Stomach (tissue), 19 donors: ENCODE measurements at regions of chr1 and their contacts with region 1.

Region 1: DNA sequence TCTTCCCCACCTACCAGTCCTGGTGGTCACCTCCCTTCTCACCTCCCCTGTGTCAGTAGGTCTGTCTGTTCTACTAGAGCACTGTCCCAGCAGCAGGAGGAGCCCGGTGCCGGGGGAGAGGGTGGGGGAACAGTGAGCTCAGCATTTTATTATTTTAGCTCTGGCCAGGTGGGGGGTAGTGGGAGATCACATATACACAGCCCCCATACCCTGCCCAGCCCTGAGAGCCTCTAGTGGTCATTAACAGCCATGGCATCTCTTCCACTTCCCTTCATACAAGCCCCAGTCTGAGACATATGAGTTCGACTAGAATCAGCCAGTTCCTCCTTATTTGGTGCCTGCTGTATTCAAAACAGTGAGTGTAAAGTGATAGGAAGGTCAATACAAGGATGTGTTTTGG is at the start of gene TMOD4:
- DNase-seq: peak in 1 of 2 donors; percentile 29
- H3K4me3 ChIP-seq: no peak within 1 kb of the TSS
- H3K27ac ChIP-seq: peak within 1 kb of the TSS in 2 of 5 donors; percentile 32 to 33
- H3K4me1 ChIP-seq: peaks cover 0 to 10% (median 0%) of the 10 kb centered on the region in 4 donors
- H3K27me3 ChIP-seq: no peaks in the 10 kb centered on the region
- CTCF ChIP-seq: peak in 3 of 7 experiments; percentile 16 to 31 (median 23)
- EP300 ChIP-seq: no peak
- POLR2A ChIP-seq: no peak
- total RNA-seq, gene TMOD4: not detected

Region 2: DNA sequence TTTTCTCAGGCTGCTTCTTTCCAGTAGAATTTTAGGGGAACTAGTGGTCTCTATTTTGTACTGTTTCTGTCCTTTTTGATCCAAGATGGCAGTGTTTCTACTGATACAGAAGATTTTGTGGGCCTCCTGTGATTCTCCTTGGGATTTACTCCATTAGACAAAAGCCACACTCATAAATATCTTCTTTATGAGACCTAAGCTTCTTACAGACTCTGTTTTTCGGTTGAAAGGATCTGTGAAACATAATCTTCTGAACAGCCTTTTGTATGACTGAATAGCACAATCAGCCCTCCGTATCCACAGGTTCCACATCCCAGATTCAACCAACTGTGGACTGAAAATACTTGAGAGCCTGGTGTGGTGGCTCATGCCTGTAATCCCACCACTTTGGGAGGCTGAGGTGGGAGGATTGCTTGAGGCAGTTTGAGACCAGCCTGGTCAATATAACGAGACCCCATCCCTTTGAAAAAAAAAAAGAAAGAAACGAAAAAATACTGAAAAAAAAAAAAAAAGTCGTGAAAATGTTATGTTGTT is 67.8 kb after region 1 on chr1:
- intact Hi-C with region 1: loop called (anchors 10 kb)
- DNase-seq: no peak
- H3K4me3 ChIP-seq: no peak overlapping the region
- H3K27ac ChIP-seq: no peak overlapping the region
- H3K4me1 ChIP-seq: no peaks in the 10 kb centered on the region
- H3K27me3 ChIP-seq: no peaks in the 10 kb centered on the region
- CTCF ChIP-seq: no peak
- EP300 ChIP-seq: no peak
- POLR2A ChIP-seq: no peak